Activated CD8-positive, alpha-beta T cell treated with anti-CD3 and anti-CD28 coated beads for 36 hours (primary cell): ENCODE measurements at regions of chr3 and their contacts with region 1.

Region 1: DNA sequence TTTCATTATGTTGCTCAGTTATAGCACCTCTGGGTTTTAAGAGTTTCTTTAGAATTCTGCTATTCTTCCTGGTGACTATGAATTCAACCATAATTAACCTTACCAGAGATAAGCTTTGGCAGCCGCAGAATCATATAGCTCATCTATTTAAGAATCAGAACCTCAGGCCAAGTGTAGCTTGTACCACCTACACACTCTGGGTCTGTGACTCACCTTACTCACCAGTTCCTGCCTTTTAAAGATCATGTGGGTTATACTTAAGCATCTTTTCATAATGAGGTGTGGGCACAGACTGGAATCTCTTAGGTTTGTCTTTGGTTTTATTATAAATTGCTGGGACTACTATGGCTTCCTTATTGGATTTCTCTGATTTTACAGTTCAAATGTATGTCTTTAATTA is 21.9 kb downstream of the CDV3 start:
- DNase-seq: peak; percentile 78
- ATAC-seq: peak; percentile 90
- H3K4me3 Mint-ChIP-seq: no peak overlapping the region
- H3K27ac Mint-ChIP-seq: peak overlapping the region; percentile 68
- H3K4me1 Mint-ChIP-seq: peaks cover 34% of the 10 kb centered on the region
- H3K27me3 Mint-ChIP-seq: no peaks in the 10 kb centered on the region
- CTCF ChIP-seq: no peak

Region 2: DNA sequence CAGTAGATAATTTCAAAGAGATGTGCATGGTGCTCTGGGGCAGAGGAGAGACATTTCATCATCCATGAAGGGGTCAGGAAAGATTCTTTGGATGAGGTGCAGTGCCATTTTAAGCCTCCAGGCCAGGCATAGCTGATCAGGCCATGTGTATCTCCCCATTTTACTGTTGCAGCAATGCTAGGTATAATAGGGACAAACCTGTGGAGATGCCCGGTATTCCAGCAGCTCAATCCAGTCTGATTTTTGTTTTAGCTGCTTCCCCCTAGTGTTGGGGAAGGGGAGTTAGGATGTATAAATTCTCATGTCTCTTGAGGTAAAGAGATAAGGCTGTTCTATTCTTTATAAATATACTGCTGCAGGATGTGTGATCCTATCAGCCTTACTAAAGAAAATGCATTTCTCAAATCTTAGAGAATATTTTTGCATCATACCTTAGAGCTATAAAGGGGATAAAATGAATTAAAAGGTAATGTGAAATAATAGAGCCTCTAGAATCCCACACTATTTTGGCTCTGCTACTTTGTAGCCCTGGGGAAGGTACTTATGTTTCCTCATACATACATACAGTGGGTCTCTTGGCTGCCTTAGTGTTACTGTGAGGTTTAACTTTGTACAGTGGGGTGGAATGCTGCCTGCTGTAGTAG is 16.7 kb before region 1 on chr3:
- CTCF ChIA-PET with region 1: interaction called, 13 read pairs
- POLR2A ChIA-PET with region 1: interaction called, 7 read pairs
- intact Hi-C with region 1: no loop called
- DNase-seq: no peak
- ATAC-seq: no peak
- H3K4me3 Mint-ChIP-seq: peak overlapping the region; percentile 81
- H3K27ac Mint-ChIP-seq: peak overlapping the region; percentile 85
- H3K4me1 Mint-ChIP-seq: peaks cover 62% of the 10 kb centered on the region
- H3K27me3 Mint-ChIP-seq: no peaks in the 10 kb centered on the region
- CTCF ChIP-seq: peak; percentile 67

Region 3: DNA sequence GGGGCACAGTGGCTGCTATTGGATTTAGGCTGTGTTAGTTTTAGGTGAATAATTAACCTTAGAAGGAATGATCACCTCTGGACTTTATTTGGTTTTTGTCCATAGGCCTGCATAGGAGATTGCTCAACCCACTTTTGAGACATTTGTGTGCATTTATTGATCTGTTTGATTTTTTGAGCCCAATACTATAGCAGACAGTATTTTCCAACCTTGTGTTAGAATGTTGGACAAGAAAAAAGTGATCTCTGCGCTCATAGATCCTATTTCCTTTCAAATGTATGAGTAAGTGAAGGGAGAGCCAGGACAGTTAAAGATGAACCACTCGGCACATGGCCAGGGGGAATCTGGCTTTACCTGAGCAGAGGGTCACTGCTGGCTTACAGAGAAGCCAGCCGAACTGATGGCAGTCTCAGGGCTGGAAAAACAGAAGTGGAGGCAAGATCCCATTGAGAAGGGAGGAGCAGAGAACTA is 75.2 kb after region 1 on chr3:
- CTCF ChIA-PET with region 1: no interaction called
- POLR2A ChIA-PET with region 1: no interaction called
- intact Hi-C with region 1: no loop called
- DNase-seq: no peak
- ATAC-seq: no peak
- H3K4me3 Mint-ChIP-seq: no peak overlapping the region
- H3K27ac Mint-ChIP-seq: no peak overlapping the region
- H3K4me1 Mint-ChIP-seq: no peaks in the 10 kb centered on the region
- H3K27me3 Mint-ChIP-seq: peaks cover 25% of the 10 kb centered on the region
- CTCF ChIP-seq: no peak